Left cardiac atrium (tissue), 4 donors: ENCODE measurements at regions of chr15 and their contacts with region 1.

Region 1: GRCh38 chr15:32659340-32660155 is 18.0 kb downstream of the SCG5 start:
- DNase-seq: no peak
- ATAC-seq: no peak

Region 2: DNA sequence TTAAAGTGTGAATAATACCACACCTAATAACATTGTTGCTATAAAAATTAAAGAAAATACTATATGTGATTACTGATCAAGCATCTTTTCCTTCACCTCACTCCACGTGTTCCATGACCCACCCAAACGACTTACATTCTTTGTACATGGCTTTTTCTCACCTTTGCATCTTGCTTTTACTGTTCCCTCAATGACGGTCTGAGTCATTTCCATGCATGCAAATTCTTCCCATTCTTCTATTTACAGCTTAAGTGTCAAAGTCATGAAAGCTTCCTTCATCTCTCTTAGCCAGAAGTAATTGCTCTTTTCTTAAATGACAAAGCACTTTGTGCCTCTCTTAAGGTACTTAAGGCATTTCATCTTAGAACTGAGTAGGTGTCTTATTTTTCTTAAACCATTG is 122.2 kb after region 1 on chr15:
- intact Hi-C with region 1: no loop called
- DNase-seq: no peak
- ATAC-seq: no peak

Region 3: GRCh38 chr15:32855942-32856341 is 196.4 kb after region 1 on chr15:
- intact Hi-C with region 1: no loop called
- DNase-seq: no peak
- ATAC-seq: peak; percentile 67 to 98

Region 4: DNA sequence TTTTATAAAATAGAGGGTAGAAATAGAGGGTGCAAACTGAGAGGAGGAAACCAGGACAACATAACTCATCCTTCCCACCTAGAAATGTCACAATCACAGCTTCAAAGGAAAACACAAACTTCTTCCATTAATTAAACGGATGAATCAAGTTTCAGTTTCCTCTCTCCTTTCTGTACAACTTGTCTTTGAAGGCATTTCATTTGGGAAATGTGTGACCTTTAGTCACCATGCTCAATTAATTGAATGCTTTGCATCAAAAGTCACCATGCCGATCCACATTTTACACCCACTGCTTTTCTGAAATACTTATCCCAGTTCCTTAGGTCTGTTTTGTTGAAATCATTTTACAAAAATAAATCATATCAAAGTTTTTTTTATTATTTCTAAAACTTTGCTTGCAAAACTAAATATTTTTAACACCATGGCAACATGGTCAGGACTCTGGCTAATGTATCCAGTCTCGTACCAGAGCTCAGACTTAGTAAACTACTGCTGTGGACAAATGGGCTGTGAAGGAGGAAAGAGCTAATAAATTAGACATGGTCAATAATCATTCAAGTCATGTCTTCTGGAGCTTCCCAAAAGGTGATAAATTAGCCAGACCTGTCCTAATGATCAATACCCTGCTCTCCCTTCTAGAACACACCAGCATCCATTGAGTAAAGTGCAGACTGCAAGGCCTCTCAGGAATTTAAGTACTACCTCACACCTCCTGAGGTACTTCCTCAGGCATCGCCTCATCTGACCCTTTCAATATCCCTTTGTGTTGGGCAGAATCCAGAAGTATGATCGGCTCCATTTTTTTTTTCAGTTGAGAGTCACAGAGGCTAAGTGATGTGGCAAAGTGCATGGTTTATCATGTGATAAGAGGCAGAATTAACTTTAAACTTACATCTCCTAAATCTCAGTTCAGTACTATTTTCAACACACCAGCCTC is 219.6 kb after region 1 on chr15:
- intact Hi-C with region 1: no loop called
- DNase-seq: no peak
- ATAC-seq: peak in 1 of 2 donors; percentile 41

Region 5: DNA sequence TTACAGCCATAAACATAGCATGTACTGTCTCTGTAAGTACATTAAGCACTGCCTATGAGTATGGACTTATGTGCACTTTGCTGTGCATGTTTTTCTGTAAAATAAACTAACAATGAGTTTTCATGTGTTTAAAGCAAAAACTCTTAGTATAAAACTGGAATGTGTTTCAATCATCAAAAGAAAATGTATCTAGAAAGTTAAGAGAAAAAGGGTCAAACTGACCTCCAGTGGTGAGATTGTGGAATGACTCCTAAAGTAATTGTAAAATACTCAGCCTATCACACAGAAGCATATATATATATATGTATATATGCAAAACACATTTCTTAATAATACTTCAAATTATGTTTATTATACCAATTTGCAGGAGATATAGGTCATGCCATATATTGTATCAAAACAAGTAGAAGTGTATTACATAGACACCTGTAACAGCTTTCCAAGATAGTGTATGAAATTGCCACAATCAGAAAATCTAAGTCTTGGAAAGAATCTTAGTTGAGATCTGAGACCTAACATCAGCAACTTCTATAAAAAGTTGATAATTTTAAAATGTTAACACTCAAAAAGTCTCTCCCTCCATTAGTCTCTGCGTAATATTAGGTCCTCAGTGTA is 335.4 kb after region 1 on chr15:
- intact Hi-C with region 1: loop called (anchors 2 to 5 kb)
- DNase-seq: no peak
- ATAC-seq: no peak